ENCODE measurements at regions of chr10 and their contacts with region 1.

Region 1: DNA sequence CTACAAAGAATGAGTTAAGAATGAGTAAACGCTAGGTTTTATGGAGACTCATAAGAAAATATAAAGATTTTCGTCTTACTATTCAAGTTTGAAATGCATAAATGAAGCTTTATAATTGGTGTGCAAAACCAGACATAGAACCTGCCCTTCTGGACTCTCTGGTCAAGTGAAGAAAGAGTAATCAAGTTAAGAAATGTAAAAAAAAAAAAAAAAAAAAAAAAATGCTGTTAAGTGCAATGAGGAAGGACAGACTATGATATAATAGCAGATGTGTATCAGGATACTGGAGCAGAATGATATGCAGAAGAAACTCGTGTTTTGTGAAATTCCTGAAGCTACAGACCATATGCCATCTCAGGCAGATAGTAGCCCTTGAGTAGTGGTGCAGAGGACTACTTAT is 5.6 kb downstream of the PCGF5 start:
- DNase-seq: no peak
- ATAC-seq: no peak
- H3K4me3 ChIP-seq: no peak overlapping the region
- H3K4me3 Mint-ChIP-seq: no peak overlapping the region
- H3K27ac ChIP-seq: no peak overlapping the region
- H3K27ac Mint-ChIP-seq: no peak overlapping the region
- H3K4me1 ChIP-seq: peaks cover 7 to 17% of the 10 kb centered on the region in 2 experiments
- H3K4me1 Mint-ChIP-seq: peaks cover 67 to 72% (median 71%) of the 10 kb centered on the region in 3 donors
- H3K27me3 ChIP-seq: no peaks in the 10 kb centered on the region
- H3K27me3 Mint-ChIP-seq: no peaks in the 10 kb centered on the region

Region 2: GRCh38 chr10:91201213-91201996 is 24.7 kb before region 1 on chr10:
- CTCF ChIA-PET with region 1: interaction called, 4 to 5 read pairs
- POLR2A ChIA-PET with region 1: interaction called in 1 of 2 experiments, 13 read pairs
- DNase-seq: peak in 17 of 35 experiments; percentile 9 to 68 (median 33)
- ATAC-seq: peak; percentile 66 to 78 (median 71)
- H3K4me3 ChIP-seq: peak overlapping the region; percentile 1 to 15
- H3K4me3 Mint-ChIP-seq: peak overlapping the region; percentile 58 to 73 (median 64)
- H3K27ac ChIP-seq: peak overlapping the region; percentile 75
- H3K27ac Mint-ChIP-seq: peak overlapping the region; percentile 94
- H3K4me1 ChIP-seq: peaks cover 42 to 44% of the 10 kb centered on the region in 2 experiments
- H3K4me1 Mint-ChIP-seq: peaks cover 87 to 90% (median 88%) of the 10 kb centered on the region in 3 donors
- H3K27me3 ChIP-seq: no peaks in the 10 kb centered on the region
- H3K27me3 Mint-ChIP-seq: no peaks in the 10 kb centered on the region

Region 3: GRCh38 chr10:91632671-91633550 is 406.8 kb after region 1 on chr10 and contains the start of gene PPP1R3C:
- CTCF ChIA-PET with region 1: no interaction called
- POLR2A ChIA-PET with region 1: no interaction called
- DNase-seq: peak in 19 of 35 experiments; percentile 1 to 26 (median 13)
- ATAC-seq: peak; percentile 60 to 87 (median 80)
- H3K4me3 ChIP-seq: peak within 1 kb of the TSS; percentile 11 to 53
- H3K4me3 Mint-ChIP-seq: peak within 1 kb of the TSS; percentile 55 to 66 (median 62)
- H3K27ac ChIP-seq: no peak within 1 kb of the TSS
- H3K27ac Mint-ChIP-seq: no peak within 1 kb of the TSS
- H3K4me1 ChIP-seq: peaks cover 0 to 12% of the 10 kb centered on the region in 2 experiments
- H3K4me1 Mint-ChIP-seq: peaks cover 7 to 13% (median 10%) of the 10 kb centered on the region in 3 donors
- H3K27me3 ChIP-seq: peaks cover 9 to 29% of the 10 kb centered on the region in 2 experiments
- H3K27me3 Mint-ChIP-seq: peaks cover 50 to 66% of the 10 kb centered on the region in 2 donors
- total RNA-seq, gene PPP1R3C: 0.13 to 0.26 (median 0.19) TPM in 3 of 5 donors, not detected in the others